Activated CD4-positive, alpha-beta memory T cell treated with anti-CD3 and anti-CD28 coated beads, Interleukin-2, amount 10 ng/mL, durations not matched to agents 7 days and 5 days (primary cell): ENCODE measurements at regions of chr4 and their contacts with region 1.

Region 1: DNA sequence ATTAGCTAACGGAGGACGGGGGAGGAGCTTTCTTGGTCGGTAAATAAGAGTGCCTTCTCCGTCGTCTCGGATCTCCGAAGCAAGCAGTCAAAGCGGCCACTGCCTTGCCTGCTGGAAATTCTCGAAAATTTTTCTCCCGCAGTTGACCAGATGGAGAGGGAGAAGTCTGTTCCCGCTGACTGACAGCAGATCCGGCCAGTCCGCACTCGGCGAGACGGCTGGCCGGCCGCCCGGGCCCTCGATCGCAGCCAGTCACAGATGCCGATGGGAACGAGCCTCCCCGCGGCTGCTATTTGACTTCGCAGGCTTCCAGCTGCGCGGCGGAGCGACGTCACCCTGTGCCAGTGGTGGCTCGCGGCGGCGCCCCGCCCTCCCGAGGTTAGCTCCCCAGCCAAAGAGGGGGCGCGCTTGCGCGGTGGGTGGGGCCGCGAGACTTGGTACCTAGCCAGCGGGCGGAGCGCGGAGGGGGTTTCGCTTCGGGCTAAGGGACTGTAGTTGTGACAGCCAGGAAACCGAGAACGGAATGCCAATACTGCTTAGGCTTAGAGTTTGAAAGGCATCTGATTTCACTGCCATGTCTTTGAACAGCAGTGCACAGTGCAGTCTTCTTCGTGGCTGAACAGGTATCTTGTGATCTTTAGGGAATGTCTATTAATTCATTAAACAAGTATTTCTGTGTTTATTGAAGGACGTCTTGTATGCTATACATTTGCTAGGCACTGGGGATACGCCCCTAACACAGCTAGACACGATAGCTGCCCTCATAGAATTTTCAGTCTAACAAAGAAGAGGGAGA is at the start of gene PPM1K:
- DNase-seq: peak; percentile 100
- H3K4me3 Mint-ChIP-seq: peak within 1 kb of the TSS; percentile 96
- H3K27ac Mint-ChIP-seq: peak within 1 kb of the TSS; percentile 100
- H3K4me1 Mint-ChIP-seq: peaks cover 50% of the 10 kb centered on the region
- H3K27me3 Mint-ChIP-seq: peaks cover 1% of the 10 kb centered on the region
- total RNA-seq, gene PPM1K: 96.9 to 101 TPM

Region 2: DNA sequence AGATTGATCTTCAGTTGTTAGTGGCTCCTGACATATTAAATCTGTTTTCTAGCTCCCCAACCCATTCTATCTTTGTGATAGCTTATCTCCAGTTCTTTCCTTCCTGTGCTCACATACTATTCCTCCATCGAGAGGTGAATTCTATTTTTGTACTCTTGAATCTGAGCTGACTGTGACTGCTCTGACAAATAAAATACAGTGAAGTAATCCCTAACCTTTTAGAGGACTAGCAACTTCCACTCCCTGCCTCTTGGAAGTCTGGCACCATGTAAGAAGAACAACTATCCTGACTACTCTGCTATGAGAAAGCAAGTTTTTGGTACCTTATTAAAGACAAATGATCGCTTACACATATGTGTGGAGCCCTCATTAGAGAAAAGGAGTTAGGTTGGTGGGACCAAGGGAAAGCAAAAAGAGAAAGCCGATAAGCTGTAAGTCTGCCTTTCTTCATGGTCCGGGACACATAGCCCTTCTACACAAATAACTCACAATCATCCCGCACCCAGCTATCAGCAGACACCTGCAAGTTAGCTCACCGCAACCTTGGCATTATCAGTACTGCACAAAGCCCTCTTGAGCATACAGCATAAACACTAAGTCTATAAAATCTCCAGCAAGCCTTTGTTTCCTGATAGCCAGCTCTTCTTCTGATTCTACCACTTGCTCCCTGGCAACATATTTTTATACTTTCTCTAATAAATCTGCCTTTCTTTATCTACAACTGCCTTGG is 13.3 kb after region 1 on chr4:
- CTCF ChIA-PET with region 1: interaction called, 3 read pairs
- POLR2A ChIA-PET with region 1: interaction called, 14 read pairs
- DNase-seq: no peak
- H3K4me3 Mint-ChIP-seq: no peak overlapping the region
- H3K27ac Mint-ChIP-seq: no peak overlapping the region
- H3K4me1 Mint-ChIP-seq: no peaks in the 10 kb centered on the region
- H3K27me3 Mint-ChIP-seq: no peaks in the 10 kb centered on the region

Region 3: GRCh38 chr4:88320780-88321373 is 36.2 kb after region 1 on chr4:
- CTCF ChIA-PET with region 1: interaction called, 14 read pairs
- POLR2A ChIA-PET with region 1: interaction called, 113 read pairs
- DNase-seq: peak; percentile 54
- H3K4me3 Mint-ChIP-seq: peak overlapping the region; percentile 75
- H3K27ac Mint-ChIP-seq: peak overlapping the region; percentile 96
- H3K4me1 Mint-ChIP-seq: peaks cover 30% of the 10 kb centered on the region
- H3K27me3 Mint-ChIP-seq: no peaks in the 10 kb centered on the region

Region 4: GRCh38 chr4:88456757-88457306 is 172.2 kb after region 1 on chr4 and contains the start of gene HERC5:
- CTCF ChIA-PET with region 1: interaction called, 19 read pairs
- POLR2A ChIA-PET with region 1: interaction called, 106 read pairs
- DNase-seq: peak; percentile 94
- H3K4me3 Mint-ChIP-seq: peak within 1 kb of the TSS; percentile 100
- H3K27ac Mint-ChIP-seq: peak within 1 kb of the TSS; percentile 100
- H3K4me1 Mint-ChIP-seq: peaks cover 53% of the 10 kb centered on the region
- H3K27me3 Mint-ChIP-seq: no peaks in the 10 kb centered on the region
- total RNA-seq, gene HERC5: 92.5 to 97.0 TPM

Region 5: DNA sequence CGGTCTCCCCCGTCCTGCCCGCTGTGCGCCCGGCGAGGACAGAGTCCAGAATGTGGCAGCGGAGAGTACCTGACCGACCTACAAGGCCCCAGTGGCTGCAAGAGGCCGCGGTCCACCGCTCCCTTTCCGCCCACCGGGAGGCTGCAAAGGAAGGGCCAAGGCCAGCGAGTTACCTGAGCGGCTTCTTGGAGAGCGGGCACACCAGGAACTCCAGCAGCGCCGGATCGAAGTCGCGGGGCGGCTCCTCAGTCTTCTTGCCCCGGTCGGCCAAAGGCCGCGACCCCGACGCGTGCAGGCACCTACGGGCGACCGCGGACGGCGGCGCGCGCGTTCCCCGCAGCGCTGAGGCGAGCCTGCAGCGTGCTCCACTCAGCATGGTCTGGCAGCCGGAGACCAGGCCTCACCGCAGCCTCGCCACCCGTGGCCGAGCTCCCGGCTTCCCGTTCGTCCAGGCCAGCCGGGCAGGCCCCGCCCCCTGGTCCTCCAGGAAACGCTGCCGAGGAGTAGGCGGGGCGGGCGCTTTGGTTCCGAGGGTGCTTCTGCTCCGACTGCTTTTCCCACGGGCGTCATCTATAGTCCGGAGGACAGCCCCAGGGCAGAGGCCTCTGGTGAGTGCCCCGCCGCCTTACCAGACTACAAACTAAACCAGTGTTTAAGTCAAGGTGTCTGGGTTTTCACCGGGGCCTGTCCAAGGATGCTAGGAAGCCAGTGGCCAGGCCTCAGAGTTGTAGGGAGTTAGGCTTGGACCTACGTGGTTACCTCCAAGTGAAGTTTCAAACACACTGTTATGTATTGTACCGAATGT is 238.9 kb after region 1 on chr4 and contains the start of gene PYURF:
- CTCF ChIA-PET with region 1: interaction called, 4 read pairs
- POLR2A ChIA-PET with region 1: interaction called, 16 read pairs
- DNase-seq: peak; percentile 79
- H3K4me3 Mint-ChIP-seq: peak within 1 kb of the TSS; percentile 83
- H3K27ac Mint-ChIP-seq: peak within 1 kb of the TSS; percentile 53
- H3K4me1 Mint-ChIP-seq: peaks cover 45% of the 10 kb centered on the region
- H3K27me3 Mint-ChIP-seq: no peaks in the 10 kb centered on the region
- total RNA-seq, gene PYURF: 50.8 to 52.1 TPM